ENCODE measurements at regions of chr1 and their contacts with region 1.

Region 1: DNA sequence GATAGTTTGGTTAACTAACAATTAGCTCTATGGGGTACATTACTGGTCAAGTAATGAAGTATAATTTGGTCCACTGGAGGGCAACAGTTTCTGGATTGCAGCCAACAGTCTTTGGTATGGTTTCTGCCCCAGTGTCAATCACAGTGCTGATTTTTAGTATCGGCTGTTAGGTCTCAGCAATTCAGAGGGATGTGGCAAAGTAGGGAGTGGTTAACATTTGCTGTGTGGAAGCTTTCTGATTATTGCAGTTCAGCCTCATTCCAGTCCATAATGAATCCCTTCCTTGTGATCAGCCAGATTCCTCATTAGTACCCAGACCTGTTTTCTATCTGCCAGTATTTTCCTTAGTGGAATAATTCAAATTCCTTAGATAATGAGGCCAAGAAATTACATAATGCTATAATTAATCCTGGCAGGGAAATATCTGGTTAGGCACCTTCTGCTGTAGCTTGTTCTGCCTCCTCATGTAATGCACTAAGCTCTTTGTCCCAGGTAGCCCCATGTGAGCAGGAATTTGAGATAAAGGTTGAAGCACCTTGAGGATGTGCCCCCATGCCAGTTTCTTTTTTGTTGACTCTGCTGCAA is 14.0 kb downstream of the F3 start:
- DNase-seq: peak; percentile 62 to 99
- H3K4me3 ChIP-seq: no peak overlapping the region
- H3K27ac ChIP-seq: peak overlapping the region; percentile 71
- H3K4me1 ChIP-seq: peaks cover 60% of the 10 kb centered on the region
- H3K27me3 ChIP-seq: no peaks in the 10 kb centered on the region
- CTCF ChIP-seq: 0 out of 2 replicates have a peak, but pooled peaks have one; percentile 40

Region 2: DNA sequence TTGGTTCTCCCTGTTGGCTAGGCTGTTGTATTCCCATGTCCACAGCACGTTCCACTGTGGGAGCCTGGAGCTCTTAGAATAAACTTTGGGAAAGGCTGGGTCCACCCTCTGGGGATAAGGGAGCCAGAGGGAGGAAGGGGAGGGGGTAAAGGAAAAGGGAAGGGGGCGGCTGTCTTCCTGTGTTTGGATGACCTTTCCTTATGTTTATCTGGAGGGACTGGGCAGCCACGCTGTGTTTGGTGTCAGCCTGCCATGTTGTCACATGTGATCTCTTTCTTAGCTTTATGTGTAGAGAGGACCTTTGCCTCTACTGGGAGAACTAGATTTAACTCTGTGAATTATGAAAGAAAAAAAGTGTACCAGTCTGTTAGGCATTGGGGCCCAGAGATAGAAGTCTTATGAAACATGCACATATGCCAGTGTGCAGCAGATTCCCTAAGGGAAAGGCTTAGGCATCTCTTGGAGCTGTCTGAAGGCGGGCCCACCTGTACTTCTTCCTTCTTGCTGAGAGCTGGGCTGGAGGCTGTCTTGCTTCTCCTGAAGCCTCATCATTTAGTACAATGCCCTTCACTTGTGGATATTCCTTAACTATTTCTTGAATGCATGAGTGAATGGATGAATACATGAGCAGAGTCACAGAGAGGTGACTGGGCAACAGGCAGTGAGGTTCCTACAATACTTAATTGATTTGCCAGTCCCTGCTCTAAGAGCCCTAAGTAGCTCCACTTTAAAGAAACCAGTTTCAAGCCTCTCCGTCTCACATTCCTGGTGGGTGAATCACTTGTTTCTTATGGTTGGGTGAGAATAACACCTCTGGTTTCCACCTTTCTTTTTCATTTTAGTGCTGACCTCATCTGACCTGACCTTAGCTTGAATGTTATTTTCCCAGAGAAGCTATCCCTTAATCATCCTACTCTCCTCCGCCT is 227.6 kb before region 1 on chr1:
- CTCF ChIA-PET with region 1: no interaction called
- POLR2A ChIA-PET with region 1: no interaction called
- intact Hi-C with region 1: no loop called
- DNase-seq: peak; percentile 71 to 100
- H3K4me3 ChIP-seq: peak overlapping the region; percentile 3; the same call in 1 of the 2 replicates
- H3K27ac ChIP-seq: peak overlapping the region; percentile 97
- H3K4me1 ChIP-seq: peaks cover 55% of the 10 kb centered on the region
- H3K27me3 ChIP-seq: no peaks in the 10 kb centered on the region
- CTCF ChIP-seq: no peak

Region 3: DNA sequence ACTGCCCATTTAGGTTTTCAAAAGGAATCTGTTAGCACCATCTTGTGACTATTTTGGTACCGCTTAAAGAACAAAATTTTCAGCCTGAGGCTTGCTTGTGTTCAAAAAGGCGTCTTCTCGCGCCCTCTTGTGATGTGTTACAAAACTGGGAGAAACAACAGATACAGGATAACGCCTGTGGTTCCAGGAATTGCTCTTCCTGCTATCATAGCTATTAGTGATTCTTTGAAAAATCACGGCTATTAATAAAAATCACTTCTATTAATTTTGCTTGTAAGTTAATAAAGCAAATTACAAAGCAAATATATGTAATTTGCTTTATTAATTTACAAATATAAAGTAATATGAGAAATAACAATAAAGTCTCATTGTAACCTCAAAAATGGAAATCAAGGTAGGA is 191.6 kb before region 1 on chr1:
- CTCF ChIA-PET with region 1: no interaction called
- POLR2A ChIA-PET with region 1: no interaction called
- intact Hi-C with region 1: no loop called
- DNase-seq: peak; percentile 67 to 95
- H3K4me3 ChIP-seq: no peak overlapping the region
- H3K27ac ChIP-seq: peak overlapping the region; percentile 22; the same call in 1 of the 2 replicates
- H3K4me1 ChIP-seq: peaks cover 55% of the 10 kb centered on the region
- H3K27me3 ChIP-seq: no peaks in the 10 kb centered on the region
- CTCF ChIP-seq: peak; percentile 99

Region 4: GRCh38 chr1:94562519-94563260 is 35.2 kb after region 1 on chr1:
- CTCF ChIA-PET with region 1: no interaction called
- POLR2A ChIA-PET with region 1: no interaction called
- intact Hi-C with region 1: loop called (anchors 1 kb)
- DNase-seq: peak; percentile 75 to 94
- H3K4me3 ChIP-seq: no peak overlapping the region; the same call in 1 of the 2 replicates
- H3K27ac ChIP-seq: peak overlapping the region; percentile 65
- H3K4me1 ChIP-seq: peaks cover 39% of the 10 kb centered on the region
- H3K27me3 ChIP-seq: no peaks in the 10 kb centered on the region
- CTCF ChIP-seq: no peak

Region 5: GRCh38 chr1:94599095-94599813 is 71.7 kb after region 1 on chr1:
- CTCF ChIA-PET with region 1: no interaction called
- POLR2A ChIA-PET with region 1: no interaction called
- intact Hi-C with region 1: loop called (anchors 2 kb)
- DNase-seq: peak; percentile 43 to 51
- H3K4me3 ChIP-seq: no peak overlapping the region
- H3K27ac ChIP-seq: no peak overlapping the region
- H3K4me1 ChIP-seq: peaks cover 47% of the 10 kb centered on the region
- H3K27me3 ChIP-seq: no peaks in the 10 kb centered on the region
- CTCF ChIP-seq: peak; percentile 71

Region 6: DNA sequence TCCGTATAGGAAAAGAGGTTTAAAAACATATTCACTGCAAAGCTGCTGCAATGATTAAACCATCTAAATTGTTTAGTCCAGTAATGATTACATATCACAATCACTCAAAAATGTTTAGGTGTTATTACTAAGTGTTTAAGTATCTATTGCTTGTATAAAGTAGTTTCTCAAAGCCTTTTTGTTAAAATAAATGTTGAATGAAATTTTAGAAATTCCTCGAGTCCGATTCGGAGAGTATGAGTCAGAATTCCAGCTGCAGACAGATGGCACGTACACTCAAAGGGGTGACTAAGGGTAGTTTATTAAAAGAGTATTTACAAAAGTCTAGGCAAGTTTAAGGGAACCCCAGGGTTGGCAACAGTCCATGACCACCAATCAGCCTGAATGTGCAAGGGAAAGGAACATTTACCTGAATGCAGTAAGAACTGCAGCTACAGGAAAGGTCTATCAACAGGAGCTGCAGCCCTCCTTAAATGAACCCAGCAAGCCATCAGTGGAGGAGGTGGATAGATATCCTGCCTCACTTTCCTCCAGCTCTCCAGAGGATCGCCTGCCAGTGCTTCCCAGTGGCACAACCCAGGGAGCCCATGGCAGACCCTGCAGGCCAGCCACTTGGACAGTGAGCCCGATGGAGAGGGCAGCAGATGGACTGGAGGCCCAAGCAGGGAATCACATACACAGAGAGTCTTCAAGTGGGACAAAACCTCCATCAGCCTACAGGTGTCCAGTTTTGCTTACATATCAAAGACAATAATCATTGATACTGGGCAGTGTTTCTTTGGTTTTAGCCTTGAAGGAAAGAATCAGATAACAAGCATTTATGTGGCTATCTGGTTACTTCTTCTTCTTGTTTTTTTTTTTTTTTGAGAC is 200.5 kb after region 1 on chr1:
- CTCF ChIA-PET with region 1: no interaction called
- POLR2A ChIA-PET with region 1: interaction called, 3 read pairs
- intact Hi-C with region 1: loop called (anchors 2 kb)
- DNase-seq: peak; percentile 83 to 100
- H3K4me3 ChIP-seq: peak overlapping the region; percentile 1; the same call in 1 of the 2 replicates
- H3K27ac ChIP-seq: peak overlapping the region; percentile 85
- H3K4me1 ChIP-seq: peaks cover 44% of the 10 kb centered on the region
- H3K27me3 ChIP-seq: no peaks in the 10 kb centered on the region
- CTCF ChIP-seq: no peak

Region 7: DNA sequence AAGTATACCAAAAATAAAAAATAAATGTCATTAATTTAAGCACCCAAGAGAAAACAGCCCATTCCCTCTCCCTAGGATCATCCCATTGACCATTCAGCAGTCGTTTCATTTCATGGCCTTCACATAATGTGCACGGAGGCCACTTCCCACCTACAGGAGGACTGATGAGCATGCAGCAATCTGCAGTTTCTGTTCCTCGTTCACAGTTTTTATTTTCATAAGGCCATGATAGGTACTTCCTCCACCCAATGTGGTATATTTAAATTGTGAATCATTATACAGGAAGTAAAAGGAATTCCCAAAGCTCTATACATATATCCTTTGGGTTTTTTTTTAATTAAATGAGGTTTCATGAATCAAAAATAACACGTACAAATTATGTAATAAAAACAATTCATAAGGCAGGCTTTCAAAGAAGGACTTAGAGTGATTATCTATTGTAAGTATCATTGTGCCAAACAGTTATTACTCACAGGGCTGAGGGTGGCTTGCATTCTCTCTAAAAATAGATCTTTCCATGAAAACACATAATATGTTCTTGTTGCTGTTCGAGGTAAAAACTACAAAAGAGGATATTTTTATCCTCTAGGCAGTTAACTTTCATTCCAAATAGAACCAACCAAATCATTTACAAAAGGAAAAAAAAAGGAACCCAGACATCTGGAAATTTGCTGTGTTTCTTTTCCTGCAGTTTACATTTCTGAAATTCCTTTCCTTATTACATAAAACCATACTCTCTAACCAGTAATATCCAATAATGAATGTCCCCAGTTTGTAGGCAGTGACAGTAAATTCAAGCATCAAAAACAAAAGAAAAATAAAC is 265.1 kb after region 1 on chr1:
- CTCF ChIA-PET with region 1: no interaction called
- POLR2A ChIA-PET with region 1: interaction called, 11 read pairs
- intact Hi-C with region 1: no loop called
- DNase-seq: peak in 1 of 2 experiments; percentile 70
- H3K4me3 ChIP-seq: no peak overlapping the region
- H3K27ac ChIP-seq: peak overlapping the region; percentile 35
- H3K4me1 ChIP-seq: peaks cover 27% of the 10 kb centered on the region
- H3K27me3 ChIP-seq: no peaks in the 10 kb centered on the region
- CTCF ChIP-seq: no peak

Region 8: DNA sequence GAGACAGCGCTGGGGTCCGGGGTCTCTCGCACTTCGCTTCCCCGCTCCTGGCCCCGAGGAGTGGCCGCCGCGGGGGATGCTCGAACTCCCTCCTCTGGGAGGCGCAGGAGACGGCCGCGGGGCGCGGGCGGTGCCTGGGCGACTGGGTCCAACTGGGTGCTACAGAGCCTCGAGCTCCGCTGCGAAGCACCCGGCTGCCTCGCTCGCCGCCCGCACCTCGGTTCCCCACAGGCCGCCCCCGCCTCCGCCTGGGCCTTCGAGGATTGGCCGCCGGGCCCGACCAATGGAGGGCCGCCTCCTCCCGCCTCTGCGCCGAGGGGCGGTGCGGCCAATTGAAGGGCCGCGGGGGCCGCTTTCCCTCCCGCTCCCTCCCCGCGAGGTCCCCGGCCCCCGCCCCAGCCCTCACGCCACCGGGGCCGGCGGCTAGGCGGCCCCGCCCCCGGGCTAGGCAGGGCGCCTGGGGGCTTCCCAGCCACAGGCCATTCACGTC is 399.4 kb after region 1 on chr1 and contains the start of gene CNN3:
- CTCF ChIA-PET with region 1: no interaction called
- POLR2A ChIA-PET with region 1: no interaction called
- intact Hi-C with region 1: loop called (anchors 5 kb)
- DNase-seq: peak; percentile 80 to 95
- H3K4me3 ChIP-seq: peak within 1 kb of the TSS; percentile 67
- H3K27ac ChIP-seq: peak within 1 kb of the TSS; percentile 64
- H3K4me1 ChIP-seq: peaks cover 67% of the 10 kb centered on the region
- H3K27me3 ChIP-seq: no peaks in the 10 kb centered on the region
- CTCF ChIP-seq: no peak
- total RNA-seq, gene CNN3: 125 and 135 TPM in 2 replicates

Region 9: GRCh38 chr1:95058974-95059373 is 531.4 kb after region 1 on chr1:
- CTCF ChIA-PET with region 1: interaction called, 10 read pairs
- POLR2A ChIA-PET with region 1: interaction called, 3 read pairs
- intact Hi-C with region 1: no loop called
- DNase-seq: no peak
- H3K4me3 ChIP-seq: no peak overlapping the region
- H3K27ac ChIP-seq: no peak overlapping the region
- H3K4me1 ChIP-seq: no peaks in the 10 kb centered on the region
- H3K27me3 ChIP-seq: no peaks in the 10 kb centered on the region
- CTCF ChIP-seq: no peak

Measured in PC-9 (cell line).